Sciatic nerve (tissue), 2 donors: ENCODE measurements at regions of chr2 and their contacts with region 1.

Region 1: GRCh38 chr2:98091738-98092137 is 4.8 kb downstream of the VWA3B start:
- DNase-seq: no peak
- ATAC-seq: no peak

Region 2: GRCh38 chr2:98050070-98050469 is 41.7 kb before region 1 on chr2:
- intact Hi-C with region 1: no loop called
- DNase-seq: no peak
- ATAC-seq: no peak

Region 3: DNA sequence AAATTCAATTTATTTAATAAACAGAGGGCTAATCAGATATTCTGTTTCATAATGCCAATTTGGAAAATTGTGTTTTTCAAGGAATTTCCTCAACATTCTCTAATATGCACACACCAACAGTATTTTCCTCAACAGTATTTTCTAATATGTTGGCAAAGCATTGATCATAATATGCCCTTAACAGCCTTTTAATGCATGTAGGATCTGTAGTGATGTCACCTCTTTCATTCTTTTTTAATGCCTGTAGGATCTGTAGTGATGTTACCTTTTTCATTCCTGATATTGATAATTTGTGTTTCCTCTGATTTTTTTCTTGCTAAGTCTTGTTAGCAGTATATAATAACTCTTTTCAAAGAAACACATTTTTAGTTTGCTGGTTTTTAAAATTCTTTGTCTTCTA is 11.1 kb after region 1 on chr2:
- intact Hi-C with region 1: loop called (anchors 1 kb)
- DNase-seq: no peak
- ATAC-seq: no peak

Region 4: GRCh38 chr2:99325363-99325762 is 1233.6 kb after region 1 on chr2:
- intact Hi-C with region 1: no loop called
- DNase-seq: no peak
- ATAC-seq: no peak